Lower leg skin (tissue), 4 donors: ENCODE measurements at regions of chr11 and their contacts with region 1.

Region 1: DNA sequence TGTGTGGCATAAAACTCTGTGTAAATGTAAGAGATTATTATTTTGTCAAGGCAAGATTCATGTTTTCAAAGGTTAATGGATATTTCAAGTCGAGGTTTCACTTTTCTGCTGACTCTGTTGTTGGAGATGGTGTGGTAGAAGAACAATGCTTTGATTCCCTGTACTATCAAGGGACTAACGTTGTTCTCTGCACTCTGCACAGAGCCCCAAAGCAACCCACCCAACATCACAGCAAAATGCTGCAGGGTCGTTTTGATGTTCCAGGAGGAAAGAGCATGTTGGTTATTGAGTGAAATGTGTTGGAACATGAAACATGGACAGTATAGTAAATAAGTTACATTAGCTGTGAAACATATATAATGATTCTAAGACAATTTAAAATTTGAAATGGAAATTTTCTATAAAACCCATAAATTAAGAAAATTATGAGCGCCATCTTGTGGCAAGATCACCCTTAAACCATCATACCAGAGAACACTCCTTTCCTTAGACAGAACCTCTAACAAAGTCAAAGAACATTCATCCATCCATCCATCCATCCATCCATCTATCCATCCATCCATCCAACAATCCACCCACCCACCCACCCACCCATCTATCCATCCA is 164.4 kb upstream of the ZBED5 start:
- DNase-seq: no peak
- H3K4me3 ChIP-seq: no peak overlapping the region
- CTCF ChIP-seq: no peak
- POLR2A ChIP-seq: no peak

Region 2: GRCh38 chr11:10674911-10675440 is 347.3 kb before region 1 on chr11:
- intact Hi-C with region 1: no loop called
- DNase-seq: peak; percentile 49 to 89
- H3K4me3 ChIP-seq: no peak overlapping the region
- CTCF ChIP-seq: no peak
- POLR2A ChIP-seq: no peak

Region 3: DNA sequence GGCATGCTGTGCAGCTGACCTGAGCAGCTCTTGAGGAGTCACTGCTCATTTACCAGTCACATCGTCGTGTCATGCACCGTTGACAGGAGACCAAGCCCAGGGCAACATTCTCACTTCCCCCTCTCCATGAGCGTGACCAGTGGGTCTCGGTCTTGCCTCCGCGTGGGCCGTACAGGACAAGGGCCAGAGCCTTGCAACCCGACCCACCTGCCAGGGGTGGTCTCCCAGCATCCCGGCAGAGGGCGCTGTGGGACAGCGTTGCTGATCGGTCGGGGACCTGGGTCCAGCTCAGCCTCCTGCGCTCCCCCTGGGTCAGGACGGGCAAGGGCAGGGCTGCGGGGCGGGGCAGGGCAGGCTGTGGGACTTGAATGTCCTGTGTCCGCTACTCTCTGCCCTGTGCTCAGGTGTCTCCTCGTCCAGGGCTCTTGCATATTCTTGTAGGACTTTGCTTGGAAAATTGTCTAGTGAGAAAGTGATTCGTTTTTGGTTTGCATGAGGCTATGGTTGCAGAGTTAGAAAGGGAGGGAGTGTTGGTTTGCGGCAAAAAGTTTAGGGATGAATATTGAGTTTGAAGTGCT is 229.7 kb before region 1 on chr11:
- intact Hi-C with region 1: loop called (anchors 5 kb)
- DNase-seq: peak; percentile 76 to 96
- H3K4me3 ChIP-seq: no peak overlapping the region
- CTCF ChIP-seq: peak in 1 of 3 donors; percentile 72
- POLR2A ChIP-seq: no peak

Region 4: GRCh38 chr11:10933455-10934292 is 88.6 kb before region 1 on chr11:
- intact Hi-C with region 1: loop called (anchors 2 kb)
- DNase-seq: peak; percentile 91 to 98
- H3K4me3 ChIP-seq: no peak overlapping the region
- CTCF ChIP-seq: peak in 1 of 3 donors; percentile 94
- POLR2A ChIP-seq: no peak